Activated B cell treated with CpG ODN at 0.5 μM for 24 hours (primary cell): ENCODE measurements at regions of chr2 and their contacts with region 1.

Region 1: DNA sequence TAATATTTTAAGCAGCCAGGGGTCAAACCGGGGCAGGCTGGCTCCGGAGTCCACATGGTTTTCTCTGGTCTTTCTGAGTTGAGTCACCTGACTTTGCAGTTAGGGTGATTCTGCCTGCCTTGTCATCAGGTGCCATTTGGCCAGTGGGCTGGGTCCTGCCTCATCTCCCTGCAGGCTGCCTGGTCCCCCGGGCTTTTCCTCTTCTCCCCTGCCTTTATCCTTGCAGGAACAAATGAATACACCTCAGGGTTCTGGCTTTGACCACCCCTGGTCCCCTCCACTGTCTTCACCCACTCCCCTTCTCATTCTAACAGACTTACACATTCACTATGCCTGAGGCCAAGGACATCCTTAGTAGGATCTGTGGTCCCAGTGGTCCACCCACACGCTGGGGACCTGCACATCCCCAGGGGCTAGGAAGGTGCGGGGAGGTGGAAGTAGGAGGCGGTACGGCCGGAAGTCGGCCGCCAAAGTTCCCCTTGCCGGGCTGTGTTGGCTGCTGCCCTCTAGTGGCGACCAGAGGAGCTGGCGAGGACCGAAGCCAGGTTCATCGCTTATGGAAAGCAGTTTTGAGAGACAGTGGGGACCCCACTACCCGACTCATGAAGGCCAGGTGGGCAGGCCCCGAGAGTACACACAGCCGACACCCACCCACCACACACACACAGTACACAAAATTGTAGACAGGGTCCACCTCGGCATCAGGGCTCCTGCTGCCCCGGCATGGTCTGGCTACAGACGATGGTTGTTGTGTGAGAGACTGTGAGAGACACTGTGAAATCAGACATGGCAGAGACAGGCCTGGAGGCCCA is 6.3 kb upstream of the TEX261 start:
- DNase-seq: peak; percentile 71
- ATAC-seq: peak; percentile 98
- H3K4me3 Mint-ChIP-seq: peak overlapping the region; percentile 77
- H3K27ac Mint-ChIP-seq: peak overlapping the region; percentile 53
- H3K4me1 Mint-ChIP-seq: peaks cover 10% of the 10 kb centered on the region
- H3K27me3 Mint-ChIP-seq: peaks cover 11% of the 10 kb centered on the region
- CTCF ChIP-seq: peak; percentile 51

Region 2: GRCh38 chr2:70984576-70985282 is 16.3 kb before region 1 on chr2:
- CTCF ChIA-PET with region 1: interaction called, 13 read pairs
- POLR2A ChIA-PET with region 1: interaction called, 5 read pairs
- intact Hi-C with region 1: loop called (anchors 1 kb)
- DNase-seq: peak; percentile 52
- ATAC-seq: peak; percentile 94
- H3K4me3 Mint-ChIP-seq: no peak overlapping the region
- H3K27ac Mint-ChIP-seq: no peak overlapping the region
- H3K4me1 Mint-ChIP-seq: peaks cover 4% of the 10 kb centered on the region
- H3K27me3 Mint-ChIP-seq: no peaks in the 10 kb centered on the region
- CTCF ChIP-seq: no peak

Region 3: DNA sequence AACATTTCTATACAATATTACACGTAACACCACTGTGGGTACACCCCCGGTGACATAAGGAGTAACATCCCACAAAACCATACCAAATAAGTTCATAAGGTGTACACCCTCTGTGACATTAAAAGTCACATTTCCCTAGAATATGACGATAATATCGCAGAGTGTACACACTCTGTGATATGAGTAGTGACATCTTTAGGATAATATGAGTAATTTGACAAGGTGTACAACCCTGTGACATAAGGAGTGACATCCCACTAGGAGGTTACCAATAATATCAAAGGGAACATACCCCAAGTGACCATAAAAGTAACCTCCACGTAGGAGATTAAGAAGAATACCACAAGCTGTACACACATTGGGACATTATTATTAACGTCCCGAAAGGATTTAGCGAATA is 17.6 kb after region 1 on chr2:
- CTCF ChIA-PET with region 1: no interaction called
- POLR2A ChIA-PET with region 1: no interaction called
- intact Hi-C with region 1: loop called (anchors 1 kb)
- DNase-seq: no peak
- ATAC-seq: no peak
- H3K4me3 Mint-ChIP-seq: no peak overlapping the region
- H3K27ac Mint-ChIP-seq: no peak overlapping the region
- H3K4me1 Mint-ChIP-seq: peaks cover 5% of the 10 kb centered on the region
- H3K27me3 Mint-ChIP-seq: no peaks in the 10 kb centered on the region
- CTCF ChIP-seq: no peak

Region 4: GRCh38 chr2:71417300-71418202 is 416.6 kb after region 1 on chr2:
- CTCF ChIA-PET with region 1: no interaction called
- POLR2A ChIA-PET with region 1: no interaction called
- intact Hi-C with region 1: no loop called
- DNase-seq: no peak
- ATAC-seq: peak; percentile 34
- H3K4me3 Mint-ChIP-seq: peak overlapping the region; percentile 84
- H3K27ac Mint-ChIP-seq: peak overlapping the region; percentile 90
- H3K4me1 Mint-ChIP-seq: peaks cover 6% of the 10 kb centered on the region
- H3K27me3 Mint-ChIP-seq: no peaks in the 10 kb centered on the region
- CTCF ChIP-seq: no peak